ENCODE measurements at regions of chr2 and their contacts with region 1.

Region 1: GRCh38 chr2:3303583-3304406 is 73.8 kb downstream of the EIPR1 start:
- DNase-seq: peak; percentile 63 to 85
- ATAC-seq: peak; percentile 85 to 99 (median 96)
- H3K4me3 ChIP-seq: no peak overlapping the region
- H3K4me3 Mint-ChIP-seq: peak overlapping the region; percentile 57
- H3K27ac ChIP-seq: no peak overlapping the region
- H3K27ac Mint-ChIP-seq: peak overlapping the region; percentile 42 to 46
- H3K4me1 ChIP-seq: peaks cover 12% of the 10 kb centered on the region
- H3K4me1 Mint-ChIP-seq: peaks cover 30% of the 10 kb centered on the region in 2 donors
- H3K27me3 ChIP-seq: no peaks in the 10 kb centered on the region
- H3K27me3 Mint-ChIP-seq: no peaks in the 10 kb centered on the region
- CTCF ChIP-seq: peak; percentile 86

Region 2: GRCh38 chr2:2121887-2122286 is 1181.9 kb before region 1 on chr2:
- intact Hi-C with region 1: loop called (anchors 2 kb)
- DNase-seq: no peak
- ATAC-seq: no peak
- H3K4me3 ChIP-seq: no peak overlapping the region
- H3K4me3 Mint-ChIP-seq: no peak overlapping the region
- H3K27ac ChIP-seq: no peak overlapping the region
- H3K27ac Mint-ChIP-seq: no peak overlapping the region
- H3K4me1 ChIP-seq: peaks cover 6% of the 10 kb centered on the region
- H3K4me1 Mint-ChIP-seq: peaks cover 11 to 15% of the 10 kb centered on the region in 2 donors
- H3K27me3 ChIP-seq: no peaks in the 10 kb centered on the region
- H3K27me3 Mint-ChIP-seq: peaks cover 4 to 15% of the 10 kb centered on the region in 2 donors
- CTCF ChIP-seq: no peak